CD8-positive, alpha-beta T cell (primary cell): ENCODE measurements at regions of chrX and their contacts with region 1.

Region 1: GRCh38 chrX:153649178-153649914 is 2.3 kb downstream of the DUSP9 start:
- DNase-seq: peak in 5 of 9 experiments; percentile 21 to 57 (median 42)
- ATAC-seq: peak; percentile 77
- H3K4me3 ChIP-seq: no peak overlapping the region
- H3K4me3 Mint-ChIP-seq: no peak overlapping the region
- H3K27ac ChIP-seq: no peak overlapping the region
- H3K27ac Mint-ChIP-seq: no peak overlapping the region
- H3K4me1 ChIP-seq: no peaks in the 10 kb centered on the region
- H3K4me1 Mint-ChIP-seq: no peaks in the 10 kb centered on the region
- H3K27me3 ChIP-seq: peaks cover 2 to 8% of the 10 kb centered on the region in 2 experiments
- H3K27me3 Mint-ChIP-seq: peaks cover 4% of the 10 kb centered on the region
- CTCF ChIP-seq: peak; percentile 17

Region 2: GRCh38 chrX:153539171-153539978 is 110.0 kb before region 1 on chrX:
- CTCF ChIA-PET with region 1: interaction called, 14 read pairs
- POLR2A ChIA-PET with region 1: interaction called, 3 read pairs
- intact Hi-C with region 1: no loop called
- DNase-seq: peak; percentile 19 to 75 (median 50)
- ATAC-seq: peak; percentile 82
- H3K4me3 ChIP-seq: no peak overlapping the region
- H3K4me3 Mint-ChIP-seq: no peak overlapping the region
- H3K27ac ChIP-seq: no peak overlapping the region
- H3K27ac Mint-ChIP-seq: no peak overlapping the region
- H3K4me1 ChIP-seq: no peaks in the 10 kb centered on the region
- H3K4me1 Mint-ChIP-seq: no peaks in the 10 kb centered on the region
- H3K27me3 ChIP-seq: no peaks in the 10 kb centered on the region
- H3K27me3 Mint-ChIP-seq: no peaks in the 10 kb centered on the region
- CTCF ChIP-seq: peak; percentile 51

Region 3: DNA sequence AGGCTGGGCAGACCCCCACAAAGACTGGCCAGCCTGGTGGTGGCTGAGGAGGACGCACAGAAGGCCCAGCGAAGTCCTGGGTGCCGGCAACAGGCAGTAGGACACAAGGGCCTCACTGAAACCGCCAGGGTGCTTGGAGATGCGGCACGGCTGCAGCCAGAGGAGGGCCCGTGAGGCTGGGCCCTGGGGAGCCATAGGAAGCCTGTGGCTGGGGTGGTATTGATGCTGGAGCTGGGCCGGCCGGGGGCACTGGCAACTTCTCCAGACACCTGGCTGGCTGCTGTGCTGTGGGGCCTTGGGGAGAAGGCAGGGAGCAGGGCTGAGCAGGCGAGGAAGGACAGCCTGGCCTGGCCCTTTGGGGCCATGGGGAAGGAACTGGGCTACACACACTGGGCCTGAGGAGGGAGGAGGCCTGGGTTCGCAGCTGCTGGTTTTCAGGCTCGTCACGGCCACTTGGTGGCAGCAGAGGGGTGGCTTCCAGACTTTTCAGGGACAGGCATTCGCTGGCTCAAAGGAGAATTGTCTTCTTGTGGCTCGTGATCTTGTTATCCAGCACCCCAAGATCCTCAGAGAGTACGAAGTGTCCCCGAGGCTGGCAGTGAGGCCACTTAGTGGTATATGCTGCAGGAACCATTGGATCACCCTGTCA is 94.7 kb before region 1 on chrX:
- CTCF ChIA-PET with region 1: interaction called, 41 read pairs
- POLR2A ChIA-PET with region 1: no interaction called
- intact Hi-C with region 1: loop called in 1 of 2 experiments (anchors 1 kb)
- DNase-seq: peak; percentile 22 to 73 (median 60)
- ATAC-seq: peak; percentile 64
- H3K4me3 ChIP-seq: no peak overlapping the region
- H3K4me3 Mint-ChIP-seq: no peak overlapping the region
- H3K27ac ChIP-seq: no peak overlapping the region
- H3K27ac Mint-ChIP-seq: no peak overlapping the region
- H3K4me1 ChIP-seq: peaks cover 2% of the 10 kb centered on the region
- H3K4me1 Mint-ChIP-seq: no peaks in the 10 kb centered on the region
- H3K27me3 ChIP-seq: no peaks in the 10 kb centered on the region
- H3K27me3 Mint-ChIP-seq: no peaks in the 10 kb centered on the region
- CTCF ChIP-seq: peak; percentile 48

Region 4: DNA sequence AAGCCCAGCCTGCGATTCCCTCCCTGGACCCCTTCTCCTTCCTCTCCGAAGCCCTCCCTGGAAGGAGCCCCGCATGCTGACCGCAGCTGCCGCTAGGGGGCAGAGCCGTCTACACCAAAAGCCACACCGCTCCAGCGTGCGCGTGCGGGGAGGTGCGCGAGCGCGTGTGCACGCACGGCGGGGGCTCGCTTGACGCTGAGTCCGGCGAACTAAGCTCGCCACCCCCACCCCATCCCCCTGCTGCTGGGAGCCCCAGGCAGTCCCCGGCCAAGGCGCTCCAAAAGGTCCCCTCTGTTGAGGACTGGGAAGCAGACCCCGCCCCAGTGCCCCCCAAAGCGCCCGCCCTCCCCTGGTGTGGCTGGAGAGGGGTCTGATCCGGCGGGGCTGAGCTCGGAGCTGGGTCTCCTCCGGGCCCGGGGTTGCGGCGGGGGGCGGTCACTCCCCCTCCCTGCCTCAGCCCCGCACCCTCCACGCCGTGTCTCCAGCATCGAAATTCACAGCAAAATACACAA is 39.4 kb before region 1 on chrX:
- CTCF ChIA-PET with region 1: interaction called, 7 read pairs
- POLR2A ChIA-PET with region 1: no interaction called
- intact Hi-C with region 1: loop called (anchors 1 to 2 kb)
- DNase-seq: peak; percentile 57 to 87 (median 77)
- ATAC-seq: peak; percentile 89
- H3K4me3 ChIP-seq: peak overlapping the region; percentile 44 to 58
- H3K4me3 Mint-ChIP-seq: peak overlapping the region; percentile 87
- H3K27ac ChIP-seq: no peak overlapping the region
- H3K27ac Mint-ChIP-seq: peak overlapping the region; percentile 77
- H3K4me1 ChIP-seq: peaks cover 12% of the 10 kb centered on the region
- H3K4me1 Mint-ChIP-seq: peaks cover 18% of the 10 kb centered on the region
- H3K27me3 ChIP-seq: no peaks in the 10 kb centered on the region
- H3K27me3 Mint-ChIP-seq: no peaks in the 10 kb centered on the region
- CTCF ChIP-seq: peak; percentile 59